Posterior vena cava (tissue), 2 donors: ENCODE measurements at regions of chr5 and their contacts with region 1.

Region 1: GRCh38 chr5:79716839-79717238 is 27.2 kb downstream of the CMYA5 start:
- DNase-seq: no peak

Region 2: GRCh38 chr5:79578872-79579271 is 138.0 kb before region 1 on chr5:
- intact Hi-C with region 1: loop called in 1 of 2 experiments (anchors 5 kb)
- DNase-seq: no peak

Region 3: DNA sequence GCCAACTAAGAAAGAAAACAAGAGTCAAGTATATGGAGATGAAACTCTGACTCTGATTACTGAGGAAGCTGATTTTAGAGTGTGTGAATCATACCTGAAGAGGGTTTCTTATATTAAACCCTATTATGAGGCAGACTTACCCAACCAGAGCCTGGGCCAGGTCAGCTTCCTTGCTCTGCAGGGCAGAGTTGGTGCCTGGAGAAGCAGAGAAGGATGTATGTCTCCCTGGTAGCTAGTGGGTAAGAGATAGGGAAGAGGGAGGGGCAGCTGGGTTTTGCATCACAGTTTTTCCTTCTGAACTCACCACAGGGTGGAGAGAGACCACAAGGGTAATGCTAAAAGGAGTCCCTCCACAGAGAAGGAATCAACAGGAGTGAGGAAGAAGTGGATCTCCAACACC is 76.9 kb after region 1 on chr5:
- intact Hi-C with region 1: no loop called
- DNase-seq: no peak